ENCODE measurements at regions of chr15 and their contacts with region 1.

Region 1: GRCh38 chr15:27070841-27071240 is 99.9 kb downstream of the GABRG3 start:
- DNase-seq: no peak

Region 2: GRCh38 chr15:27292641-27293040 is 221.8 kb after region 1 on chr15:
- intact Hi-C with region 1: no loop called
- DNase-seq: no peak

Region 3: DNA sequence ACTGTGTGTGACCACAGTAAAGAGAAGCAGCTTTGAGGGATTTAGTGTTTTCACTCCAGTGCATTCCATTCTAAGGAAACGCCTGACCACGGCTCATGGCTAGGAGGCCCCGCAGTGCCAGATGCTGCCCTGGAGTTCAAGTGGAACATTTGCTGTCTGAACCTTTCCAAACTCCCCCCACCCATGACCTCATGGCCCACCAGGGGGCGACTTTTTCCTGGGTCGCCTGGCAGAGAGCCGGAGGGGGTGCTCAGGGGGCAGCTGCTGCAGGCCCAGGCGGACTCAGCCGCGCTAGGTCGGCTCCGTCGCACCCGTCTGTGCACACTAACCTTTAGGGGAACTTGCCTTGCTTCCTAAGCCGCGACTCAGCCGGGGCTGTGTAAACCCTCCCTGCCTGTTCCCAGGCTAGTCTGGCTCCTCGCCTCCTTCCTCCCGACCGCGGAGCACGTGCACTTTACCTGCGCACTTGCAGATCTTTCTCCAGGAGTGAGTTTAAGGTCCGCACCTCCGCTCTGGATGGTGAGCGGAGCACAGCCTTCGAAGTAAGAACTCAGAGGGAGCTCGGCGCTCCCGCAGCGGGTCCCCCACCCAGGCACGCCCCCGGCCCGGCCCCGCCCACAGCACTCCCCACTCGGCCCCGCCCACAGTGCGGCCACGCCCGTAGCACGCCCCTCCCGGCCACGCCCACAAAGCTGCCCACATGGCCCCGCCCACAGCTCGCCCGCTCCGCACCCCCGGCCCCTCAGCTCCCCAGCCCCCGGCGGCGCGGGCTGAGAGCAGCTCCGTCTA is 1028.1 kb after region 1 on chr15 and contains the start of gene OCA2:
- intact Hi-C with region 1: no loop called
- DNase-seq: peak; percentile 85
- total RNA-seq, gene OCA2: 0.38 to 1.4 TPM

Region 4: GRCh38 chr15:28913171-28913765 is 1842.4 kb after region 1 on chr15:
- intact Hi-C with region 1: loop called in 1 of 2 experiments (anchors 5 kb)
- DNase-seq: peak; percentile 69